Astrocyte of the cerebellum (primary cell): ENCODE measurements at regions of chr7 and their contacts with region 1.

Region 1: GRCh38 chr7:31122649-31123058 is 70.5 kb downstream of the ADCYAP1R1 start:
- DNase-seq: peak; percentile 83
- H3K4me3 ChIP-seq: no peak overlapping the region
- CTCF ChIP-seq: peak; percentile 87

Region 2: DNA sequence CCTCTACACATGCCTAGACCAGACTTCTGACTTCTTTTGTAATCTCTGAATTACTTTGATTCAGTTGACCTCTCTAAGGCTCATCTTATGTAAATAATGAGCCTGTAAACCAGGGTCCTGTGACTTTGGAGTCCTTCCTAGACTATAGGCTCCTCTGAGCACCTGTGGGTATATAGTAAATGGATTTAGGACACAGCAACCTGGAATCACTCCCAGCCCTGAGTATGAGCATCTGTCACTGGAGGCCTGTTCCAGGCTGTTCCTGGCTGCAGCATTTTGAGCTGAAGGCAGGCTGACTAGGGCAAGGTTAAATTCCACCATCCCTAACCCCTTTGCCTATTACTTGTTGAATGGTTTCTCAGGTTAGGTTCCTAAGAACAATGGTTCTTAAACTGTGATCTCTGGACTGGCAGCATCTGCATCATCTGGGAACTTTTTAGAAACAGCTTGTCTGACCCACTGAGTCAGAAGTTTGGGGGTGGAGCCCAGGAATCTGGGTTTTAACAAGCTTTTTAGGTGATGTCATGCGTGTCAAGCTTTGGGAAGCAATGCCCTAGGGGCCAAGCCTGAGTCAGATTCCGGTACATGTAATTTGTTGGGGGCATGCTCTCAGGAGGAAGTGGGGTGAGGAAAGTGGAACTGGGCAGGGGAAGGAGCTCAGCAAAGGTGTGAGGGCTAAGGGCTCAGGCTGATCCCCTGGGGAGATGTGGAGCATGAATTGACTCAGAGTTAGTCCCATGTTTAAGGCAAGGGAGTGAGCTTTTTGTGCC is 323.3 kb before region 1 on chr7:
- in situ Hi-C with region 1: loop called (anchors 25 kb)
- DNase-seq: peak; percentile 41
- H3K4me3 ChIP-seq: no peak overlapping the region
- CTCF ChIP-seq: no peak

Region 3: DNA sequence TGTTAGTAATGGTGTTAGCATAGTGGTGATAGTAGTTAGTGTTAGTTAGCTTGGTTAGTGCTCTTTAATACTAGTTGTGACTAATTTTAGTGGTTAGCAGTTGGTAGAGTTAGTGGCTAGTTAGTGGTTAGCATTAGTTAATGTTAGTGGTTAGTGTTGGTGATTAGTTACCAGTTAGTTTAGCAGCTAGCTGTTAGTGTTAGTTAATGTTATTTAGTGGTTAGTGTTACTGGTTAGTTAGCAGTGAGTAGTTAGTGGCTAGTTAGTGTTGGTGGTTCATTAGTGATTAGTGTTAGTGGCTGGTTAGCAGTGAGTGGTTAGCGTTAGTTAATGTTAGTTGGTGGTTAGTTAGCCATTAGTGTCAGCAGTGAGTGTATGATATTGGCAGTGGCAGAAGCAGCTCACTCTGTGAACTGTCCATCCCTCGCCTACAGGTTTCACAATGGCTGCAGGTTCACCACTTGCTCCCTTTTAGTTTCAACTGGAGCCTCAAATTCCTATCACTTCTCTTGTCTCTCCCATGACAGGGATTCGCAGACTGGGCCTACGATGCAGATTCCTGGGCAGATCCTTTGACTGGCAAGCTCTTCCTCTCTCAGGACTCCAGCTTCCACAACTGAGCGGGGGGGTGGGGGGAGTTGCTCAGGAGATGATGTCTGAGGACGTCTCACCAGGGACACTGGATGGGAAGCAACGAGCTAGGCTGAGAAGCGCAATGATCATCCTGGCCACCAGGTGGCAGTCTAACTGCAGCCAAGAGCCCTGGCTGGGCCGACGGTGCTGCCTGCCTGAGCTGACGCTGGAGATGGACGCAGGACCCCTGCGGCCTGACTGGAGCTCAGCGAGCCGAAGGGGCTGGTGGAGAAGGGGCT is 139.4 kb before region 1 on chr7:
- in situ Hi-C with region 1: loop called (anchors 25 kb)
- DNase-seq: peak; percentile 68
- H3K4me3 ChIP-seq: no peak overlapping the region
- CTCF ChIP-seq: peak; percentile 85